ENCODE measurements at regions of chr11 and their contacts with region 1.

Region 1: DNA sequence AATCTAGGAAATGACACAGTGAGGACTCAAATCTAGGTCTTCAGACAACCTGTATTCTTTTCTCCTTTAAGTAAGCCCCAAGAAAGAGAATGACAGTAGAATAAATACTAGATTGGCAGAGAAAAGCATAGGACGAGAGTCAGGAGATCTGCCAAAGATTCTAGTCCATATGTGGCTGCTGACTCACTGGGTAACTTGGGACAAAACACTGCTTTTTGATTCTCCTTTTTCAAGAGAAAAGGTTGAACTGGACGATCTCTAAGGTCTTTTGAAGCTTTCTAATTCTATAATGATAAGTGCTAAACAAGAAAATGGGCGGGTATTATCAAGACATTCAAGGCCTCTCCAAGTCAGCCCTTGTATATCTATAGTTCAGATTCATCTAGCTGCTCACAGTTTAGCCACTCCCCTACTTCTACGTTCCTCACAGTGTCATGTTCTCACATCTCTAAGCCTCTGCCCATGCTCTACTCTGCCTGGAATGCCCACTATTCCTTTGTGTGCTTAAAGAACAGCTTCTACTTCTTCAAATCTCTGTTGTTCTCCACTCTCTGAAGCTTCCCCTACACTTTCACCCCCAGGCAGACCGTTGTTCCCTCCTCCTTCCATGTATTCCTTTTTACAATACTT is 53.0 kb downstream of the RELT start:
- DNase-seq: no peak
- ATAC-seq: no peak
- H3K4me3 Mint-ChIP-seq: no peak overlapping the region
- H3K27ac Mint-ChIP-seq: no peak overlapping the region
- H3K4me1 Mint-ChIP-seq: peaks cover 3% of the 10 kb centered on the region
- H3K27me3 Mint-ChIP-seq: no peaks in the 10 kb centered on the region

Region 2: DNA sequence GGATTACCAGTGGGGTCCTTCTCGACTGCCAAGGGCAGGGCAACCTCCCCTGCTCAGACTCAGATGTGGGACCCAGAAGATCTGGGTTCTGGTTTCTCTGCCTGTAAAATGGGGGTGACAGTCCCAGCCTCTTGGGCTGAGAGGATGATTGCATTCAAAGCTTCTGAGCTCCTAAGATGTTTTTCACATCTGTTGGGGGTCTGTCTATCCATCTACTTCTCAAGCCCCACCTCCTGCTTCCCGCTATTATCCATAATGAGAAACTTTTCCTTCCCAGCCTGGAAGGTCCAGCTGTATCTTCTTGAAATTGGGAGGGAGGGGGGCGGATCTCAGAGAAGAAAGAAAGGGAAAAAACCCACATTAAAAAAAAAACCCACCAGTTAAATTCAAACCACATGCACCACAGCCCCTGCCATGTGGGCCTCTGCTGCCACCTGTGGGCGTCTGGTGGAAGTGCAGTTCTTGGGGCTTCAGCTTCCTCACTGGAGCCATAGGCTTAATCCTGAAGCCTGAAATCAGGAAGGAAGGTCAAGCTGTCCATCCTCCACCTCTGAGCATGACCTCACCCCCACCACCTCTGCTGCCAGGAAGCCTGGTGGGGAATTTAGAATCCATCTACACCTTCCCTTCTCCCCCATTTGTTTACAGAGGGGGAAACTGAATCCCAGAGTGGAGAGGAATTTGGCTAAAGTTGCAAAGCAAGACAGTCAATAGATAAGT is 93.9 kb before region 1 on chr11:
- CTCF ChIA-PET with region 1: no interaction called
- DNase-seq: peak; percentile 81
- ATAC-seq: peak; percentile 72
- H3K4me3 Mint-ChIP-seq: no peak overlapping the region
- H3K27ac Mint-ChIP-seq: no peak overlapping the region
- H3K4me1 Mint-ChIP-seq: peaks cover 2% of the 10 kb centered on the region
- H3K27me3 Mint-ChIP-seq: no peaks in the 10 kb centered on the region

Region 3: GRCh38 chr11:73414977-73415651 is 14.1 kb before region 1 on chr11:
- CTCF ChIA-PET with region 1: interaction called, 10 read pairs
- DNase-seq: no peak
- ATAC-seq: peak; percentile 43
- H3K4me3 Mint-ChIP-seq: no peak overlapping the region
- H3K27ac Mint-ChIP-seq: no peak overlapping the region
- H3K4me1 Mint-ChIP-seq: peaks cover 8% of the 10 kb centered on the region
- H3K27me3 Mint-ChIP-seq: no peaks in the 10 kb centered on the region

Measured in activated CD8-positive, alpha-beta memory T cell treated with anti-CD3 and anti-CD28 coated beads, Interleukin-2, amount 10 ng/mL, durations not matched to agents 7 days and 5 days (primary cell).